Right ventricle myocardium inferior (tissue), 1 donor: ENCODE measurements at regions of chr4 and their contacts with region 1.

Region 1: DNA sequence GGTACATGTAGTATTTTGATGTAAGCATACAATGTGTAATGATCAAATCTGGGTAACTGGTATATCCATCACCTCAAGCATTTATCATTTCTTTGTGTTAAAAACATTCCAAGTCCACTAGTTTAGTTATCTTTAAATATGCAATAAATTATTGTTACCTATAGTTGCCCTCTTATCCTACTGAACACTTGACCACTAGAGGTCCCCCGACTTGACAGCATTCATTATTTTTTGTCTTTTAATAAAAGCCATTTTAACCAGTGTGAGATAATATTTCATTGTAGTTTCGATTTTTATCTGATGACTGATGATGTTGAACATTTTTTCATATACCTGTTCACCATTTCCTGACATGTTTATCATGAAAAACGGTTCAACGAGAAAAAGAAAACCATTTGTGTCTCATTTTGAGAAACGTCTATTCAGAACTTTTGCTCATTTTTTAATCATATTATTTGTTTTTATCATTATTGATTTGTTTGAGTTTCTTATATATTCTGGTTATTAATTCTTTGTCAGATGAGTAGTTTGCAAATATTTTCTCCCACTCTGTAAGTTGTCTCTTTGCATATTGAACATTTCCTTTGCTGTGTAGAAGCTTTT is 199.0 kb upstream of the CXXC4 start:
- DNase-seq: no peak
- ATAC-seq: no peak

Region 2: GRCh38 chr4:104860238-104861123 is 166.8 kb after region 1 on chr4:
- intact Hi-C with region 1: loop called (anchors 2 kb)
- DNase-seq: no peak
- ATAC-seq: peak; percentile 79